PC-3 (cell line): ENCODE measurements at regions of chr11 and their contacts with region 1.

Region 1: DNA sequence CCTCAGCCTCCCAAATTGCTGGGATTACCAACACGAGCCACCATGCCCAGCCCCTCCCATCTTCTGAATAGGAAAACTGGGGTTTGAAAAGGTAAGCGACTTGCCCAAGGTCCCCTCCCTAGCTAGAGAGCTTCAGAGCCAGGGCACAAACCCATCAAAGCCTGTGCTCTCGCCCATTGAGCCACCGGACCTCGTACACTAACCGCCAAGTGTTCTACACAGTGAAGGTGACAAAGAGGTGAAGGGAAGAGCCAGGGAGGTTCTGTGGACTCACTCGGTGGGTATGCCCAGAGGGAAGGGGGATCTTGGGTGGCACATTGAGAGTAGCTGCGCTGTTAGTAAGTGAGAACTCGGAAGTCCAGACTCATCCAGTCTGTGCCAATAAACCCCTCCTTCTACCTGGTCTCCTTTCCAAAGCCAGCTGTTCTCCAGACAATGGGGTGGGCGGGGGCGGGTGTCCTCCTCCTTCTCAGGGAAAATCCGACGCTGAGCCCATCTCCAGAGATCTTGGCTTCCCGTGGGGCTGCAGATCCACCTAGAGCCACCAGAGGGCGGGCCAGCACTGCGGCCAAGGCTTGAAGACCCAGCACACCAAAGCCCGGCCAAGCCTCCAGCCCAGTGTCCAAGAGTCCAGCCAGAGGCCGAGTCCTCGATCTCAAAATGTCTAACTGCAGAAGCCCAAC is 3.2 kb upstream of the RTN4RL2 start:
- DNase-seq: peak; percentile 94
- ATAC-seq: peak; percentile 69
- H3K4me3 ChIP-seq: peak overlapping the region; percentile 58; the same call in 1 of the 2 replicates
- H3K27ac ChIP-seq: no peak overlapping the region
- H3K4me1 ChIP-seq: peaks cover 24% of the 10 kb centered on the region
- H3K27me3 ChIP-seq: peaks cover 13% of the 10 kb centered on the region
- CTCF ChIP-seq: peak; percentile 91

Region 2: GRCh38 chr11:57100638-57101331 is 356.3 kb before region 1 on chr11:
- CTCF ChIA-PET with region 1: no interaction called
- POLR2A ChIA-PET with region 1: no interaction called
- intact Hi-C with region 1: no loop called
- DNase-seq: no peak
- ATAC-seq: no peak
- H3K4me3 ChIP-seq: no peak overlapping the region
- H3K27ac ChIP-seq: no peak overlapping the region
- H3K4me1 ChIP-seq: no peaks in the 10 kb centered on the region
- H3K27me3 ChIP-seq: peaks cover 55% of the 10 kb centered on the region
- CTCF ChIP-seq: no peak

Region 3: GRCh38 chr11:57345555-57346211 is 111.4 kb before region 1 on chr11:
- CTCF ChIA-PET with region 1: interaction called, 21 read pairs
- POLR2A ChIA-PET with region 1: interaction called, 3 read pairs
- intact Hi-C with region 1: loop called (anchors 1 kb)
- DNase-seq: peak; percentile 94
- ATAC-seq: peak; percentile 81
- H3K4me3 ChIP-seq: no peak overlapping the region
- H3K27ac ChIP-seq: no peak overlapping the region
- H3K4me1 ChIP-seq: no peaks in the 10 kb centered on the region
- H3K27me3 ChIP-seq: no peaks in the 10 kb centered on the region
- CTCF ChIP-seq: peak; percentile 79

Region 4: DNA sequence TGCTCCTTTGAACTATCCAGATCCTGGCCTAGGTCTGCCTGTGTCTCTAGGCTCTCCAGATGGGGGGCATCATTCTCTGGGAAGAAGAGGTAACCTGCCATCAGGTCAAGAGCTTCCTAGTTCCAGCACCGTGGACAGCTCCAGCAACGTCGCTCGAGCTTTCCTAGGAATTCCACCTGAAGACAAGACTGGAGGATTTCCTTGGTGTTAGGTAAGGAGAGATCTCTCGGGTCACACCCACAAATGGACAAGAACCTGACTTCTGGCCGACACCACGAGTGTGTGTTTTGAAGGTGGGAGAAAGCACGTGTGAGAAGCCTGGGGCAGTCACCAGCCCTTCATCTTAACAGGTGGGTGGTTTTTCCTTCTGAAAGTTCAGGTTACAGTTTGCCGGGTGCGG is 77.4 kb before region 1 on chr11:
- CTCF ChIA-PET with region 1: interaction called, 10 read pairs
- POLR2A ChIA-PET with region 1: no interaction called
- intact Hi-C with region 1: no loop called
- DNase-seq: peak; percentile 65
- ATAC-seq: no peak
- H3K4me3 ChIP-seq: no peak overlapping the region
- H3K27ac ChIP-seq: no peak overlapping the region
- H3K4me1 ChIP-seq: no peaks in the 10 kb centered on the region
- H3K27me3 ChIP-seq: peaks cover 14% of the 10 kb centered on the region; the same call in 1 of the 2 replicates
- CTCF ChIP-seq: no peak

Region 5: GRCh38 chr11:57387289-57388030 is 69.6 kb before region 1 on chr11:
- CTCF ChIA-PET with region 1: interaction called, 10 read pairs
- POLR2A ChIA-PET with region 1: no interaction called
- intact Hi-C with region 1: no loop called
- DNase-seq: peak; percentile 39
- ATAC-seq: peak; percentile 50
- H3K4me3 ChIP-seq: no peak overlapping the region
- H3K27ac ChIP-seq: no peak overlapping the region
- H3K4me1 ChIP-seq: no peaks in the 10 kb centered on the region
- H3K27me3 ChIP-seq: peaks cover 61% of the 10 kb centered on the region
- CTCF ChIP-seq: peak; percentile 44

Region 6: GRCh38 chr11:57432714-57433163 is 24.4 kb before region 1 on chr11:
- CTCF ChIA-PET with region 1: no interaction called
- POLR2A ChIA-PET with region 1: no interaction called
- intact Hi-C with region 1: no loop called
- DNase-seq: peak; percentile 66
- ATAC-seq: peak; percentile 64; the same call in 1 of the 2 replicates
- H3K4me3 ChIP-seq: no peak overlapping the region
- H3K27ac ChIP-seq: peak overlapping the region; percentile 70
- H3K4me1 ChIP-seq: peaks cover 39% of the 10 kb centered on the region
- H3K27me3 ChIP-seq: no peaks in the 10 kb centered on the region
- CTCF ChIP-seq: no peak

Region 7: DNA sequence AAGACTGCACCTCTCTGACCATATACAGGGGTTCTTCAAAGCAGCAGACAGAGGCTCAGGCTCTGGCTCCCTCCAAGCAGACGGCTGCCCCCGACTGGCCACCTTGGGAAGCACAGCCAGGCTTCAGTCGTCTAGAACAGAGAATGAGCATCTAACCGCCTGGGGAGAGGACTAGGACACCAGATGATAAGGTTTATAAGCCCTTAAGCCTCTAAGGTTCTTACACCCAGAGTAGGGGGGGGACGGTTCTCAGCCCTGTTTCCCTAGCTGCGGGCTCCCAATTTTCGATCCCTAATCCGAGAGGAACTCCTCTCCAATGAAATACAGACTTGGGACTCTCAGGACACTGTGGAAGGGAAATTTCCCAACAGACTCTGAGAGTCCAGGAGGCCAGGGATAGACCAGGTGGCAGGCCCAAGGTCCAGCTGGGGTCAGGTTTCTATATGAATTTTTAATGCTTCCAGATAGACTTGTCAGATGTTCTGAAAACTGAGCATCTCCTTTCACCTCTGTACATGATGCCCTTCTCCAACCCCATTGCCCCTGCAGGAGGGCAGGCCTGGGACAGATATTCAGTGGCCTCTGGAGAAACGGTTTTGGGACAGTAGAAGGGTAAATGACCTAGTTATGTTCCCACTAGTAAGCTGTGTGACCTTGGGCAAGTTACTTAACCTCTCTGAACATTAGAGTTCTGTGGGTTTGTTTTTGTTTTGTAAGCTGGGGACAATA is 23.5 kb after region 1 on chr11:
- CTCF ChIA-PET with region 1: interaction called, 11 read pairs
- POLR2A ChIA-PET with region 1: no interaction called
- intact Hi-C with region 1: loop called (anchors 1 kb)
- DNase-seq: peak; percentile 80
- ATAC-seq: peak; percentile 31; the same call in 1 of the 2 replicates
- H3K4me3 ChIP-seq: no peak overlapping the region
- H3K27ac ChIP-seq: no peak overlapping the region
- H3K4me1 ChIP-seq: peaks cover 23% of the 10 kb centered on the region
- H3K27me3 ChIP-seq: no peaks in the 10 kb centered on the region
- CTCF ChIP-seq: peak; percentile 93

Region 8: DNA sequence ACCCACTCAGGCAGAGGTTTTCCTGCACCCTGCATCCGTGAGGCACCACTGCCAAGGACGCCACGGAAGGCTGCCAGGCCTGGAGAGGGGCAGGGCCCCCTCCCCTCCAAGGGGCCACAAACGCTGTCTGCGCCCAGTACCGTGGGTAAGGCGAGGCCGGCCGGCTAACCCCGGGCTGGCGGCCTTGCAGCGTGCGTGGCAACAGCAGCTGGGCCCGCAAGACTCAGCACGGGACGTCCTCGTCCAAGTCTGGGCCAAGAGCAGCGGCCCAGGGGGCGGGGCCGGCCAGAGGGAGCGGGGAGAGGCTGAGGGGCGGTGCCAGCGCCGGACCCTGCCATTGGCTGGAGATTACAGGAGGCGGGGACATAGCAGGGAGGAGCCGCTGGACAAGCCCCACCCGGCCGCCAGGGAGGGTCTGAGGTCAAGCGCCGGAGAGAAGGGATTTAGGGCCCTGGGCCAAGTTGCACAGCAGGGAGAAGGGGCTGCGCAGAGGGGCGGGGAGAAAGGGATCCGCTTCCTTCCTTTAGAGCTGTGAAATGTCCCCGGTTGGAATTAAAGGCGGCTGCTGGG is 42.4 kb after region 1 on chr11:
- CTCF ChIA-PET with region 1: no interaction called
- POLR2A ChIA-PET with region 1: no interaction called
- intact Hi-C with region 1: no loop called
- DNase-seq: peak; percentile 92
- ATAC-seq: peak; percentile 100
- H3K4me3 ChIP-seq: peak overlapping the region; percentile 43; the same call in 1 of the 2 replicates
- H3K27ac ChIP-seq: no peak overlapping the region
- H3K4me1 ChIP-seq: peaks cover 9% of the 10 kb centered on the region; the same call in 1 of the 2 replicates
- H3K27me3 ChIP-seq: no peaks in the 10 kb centered on the region
- CTCF ChIP-seq: no peak

Region 9: DNA sequence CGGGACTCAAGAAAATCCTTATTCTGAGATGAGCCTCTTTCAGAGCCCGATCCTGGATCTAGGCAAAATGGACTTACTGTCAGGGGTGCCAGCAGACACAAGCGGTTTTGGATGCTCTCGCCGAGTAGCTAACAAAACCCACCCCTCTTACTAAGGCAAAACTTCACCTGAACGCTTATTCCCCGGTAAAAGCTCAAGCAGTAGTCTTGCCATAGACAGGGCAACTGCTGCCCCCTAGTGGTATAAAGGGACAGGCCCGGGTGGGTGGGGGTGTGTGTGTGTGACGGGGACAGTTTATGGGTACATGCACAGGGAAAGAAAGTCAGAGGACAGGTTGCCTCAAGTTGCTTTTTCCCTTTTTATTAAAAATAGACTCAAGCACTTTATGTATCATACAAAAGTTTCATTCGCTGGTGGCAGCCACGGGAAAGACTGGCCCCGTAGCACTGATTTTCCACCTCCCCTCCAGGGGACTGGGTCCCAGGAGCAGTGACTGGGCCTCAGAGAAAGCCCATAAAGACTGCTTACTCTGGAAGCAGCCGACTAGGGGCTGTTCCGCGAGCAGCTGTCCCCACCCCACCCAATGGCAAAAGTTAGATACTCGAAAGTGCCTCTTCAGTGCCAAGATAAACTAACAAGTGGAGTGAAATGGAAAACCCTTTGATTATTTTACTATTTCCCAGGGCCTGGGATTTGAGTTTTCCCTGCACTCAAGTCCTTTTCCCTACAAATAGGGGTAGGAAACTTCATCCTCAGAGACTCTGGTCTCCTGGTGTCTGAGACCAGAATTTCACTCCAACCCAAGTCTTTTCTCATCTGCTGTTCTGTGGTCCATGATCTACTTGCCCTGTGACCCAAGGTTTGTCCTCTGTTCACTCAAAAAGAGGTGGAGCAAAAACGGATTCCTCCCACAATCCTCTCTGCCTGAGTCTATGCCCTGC is 187.9 kb after region 1 on chr11:
- CTCF ChIA-PET with region 1: no interaction called
- POLR2A ChIA-PET with region 1: no interaction called
- intact Hi-C with region 1: loop called (anchors 2 kb)
- DNase-seq: peak; percentile 88
- ATAC-seq: peak; percentile 65
- H3K4me3 ChIP-seq: no peak overlapping the region
- H3K27ac ChIP-seq: no peak overlapping the region
- H3K4me1 ChIP-seq: peaks cover 15% of the 10 kb centered on the region
- H3K27me3 ChIP-seq: peaks cover 29% of the 10 kb centered on the region
- CTCF ChIP-seq: peak; percentile 96

Region 10: GRCh38 chr11:57712256-57713150 is 255.4 kb after region 1 on chr11 and contains the start of gene TMX2:
- CTCF ChIA-PET with region 1: no interaction called
- POLR2A ChIA-PET with region 1: interaction called, 38 read pairs
- intact Hi-C with region 1: no loop called
- DNase-seq: peak; percentile 99
- ATAC-seq: peak; percentile 92
- H3K4me3 ChIP-seq: peak within 1 kb of the TSS; percentile 99
- H3K27ac ChIP-seq: peak within 1 kb of the TSS; percentile 75
- H3K4me1 ChIP-seq: peaks cover 24% of the 10 kb centered on the region
- H3K27me3 ChIP-seq: no peaks in the 10 kb centered on the region
- CTCF ChIP-seq: no peak
- total RNA-seq, gene TMX2: 228 and 241 TPM in 2 replicates